ENCODE measurements at regions of chr7 and their contacts with region 1.

Region 1: DNA sequence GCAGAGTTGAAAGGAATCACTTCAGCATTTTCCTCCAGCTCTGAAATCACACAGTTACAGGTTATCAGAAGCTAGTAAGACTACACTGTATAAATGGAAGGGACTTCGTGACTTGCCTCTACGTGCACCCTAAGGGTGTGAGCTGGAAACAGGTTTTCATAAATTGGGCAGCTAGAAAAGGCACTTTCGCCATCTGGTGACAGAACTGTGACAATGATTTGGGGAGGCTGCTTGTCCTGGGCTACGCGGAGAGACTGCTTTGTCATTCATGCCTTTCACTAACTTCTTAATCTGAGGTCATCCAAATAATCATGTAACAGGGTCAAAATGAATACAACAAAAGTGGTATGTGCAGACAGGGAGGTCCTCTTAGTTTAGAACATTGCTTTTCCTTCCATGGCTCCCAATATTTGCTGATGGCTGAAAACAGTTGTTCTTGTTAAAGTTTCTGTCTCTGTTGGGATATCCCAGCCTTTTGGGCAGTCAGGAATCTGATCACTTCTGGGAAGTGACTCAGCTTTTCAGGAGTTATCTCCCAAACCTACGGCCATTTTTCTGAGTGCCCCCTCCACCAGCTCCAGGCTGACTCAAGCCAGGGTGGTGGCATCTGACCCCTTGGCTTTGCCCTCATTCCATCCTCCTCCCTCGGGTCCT is 17.8 kb downstream of the VWC2 start:
- DNase-seq: peak; percentile 91
- H3K4me3 ChIP-seq: no peak overlapping the region
- H3K27ac ChIP-seq: peak overlapping the region; percentile 55
- H3K4me1 ChIP-seq: peaks cover 25% of the 10 kb centered on the region
- CTCF ChIP-seq: peak; percentile 96

Region 2: DNA sequence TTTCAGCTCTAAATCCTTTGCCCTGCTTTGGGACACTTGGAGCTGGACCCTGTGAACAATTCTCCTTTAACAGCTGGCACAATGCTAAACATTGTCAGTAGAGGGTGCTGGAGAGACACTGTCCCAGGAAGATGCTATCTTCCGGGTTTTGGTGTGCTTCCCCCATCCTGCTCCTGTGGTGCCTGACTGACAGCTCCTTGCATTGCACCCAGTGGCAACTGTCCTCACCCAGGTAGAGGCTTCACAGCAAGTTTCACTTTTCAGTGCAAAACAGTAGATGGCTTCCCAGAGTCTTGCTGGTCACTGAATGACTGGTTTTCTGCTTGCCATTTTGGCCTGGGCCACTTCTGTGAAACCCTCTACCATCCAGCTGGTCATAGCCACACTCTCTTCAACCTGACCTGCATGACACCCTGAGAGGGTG is 789.6 kb before region 1 on chr7:
- CTCF ChIA-PET with region 1: no interaction called
- POLR2A ChIA-PET with region 1: interaction called, 5 read pairs
- intact Hi-C with region 1: loop called (anchors 1 kb)
- DNase-seq: peak; percentile 83
- H3K4me3 ChIP-seq: no peak overlapping the region
- H3K27ac ChIP-seq: no peak overlapping the region
- H3K4me1 ChIP-seq: peaks cover 6% of the 10 kb centered on the region
- CTCF ChIP-seq: peak; percentile 89

Region 3: DNA sequence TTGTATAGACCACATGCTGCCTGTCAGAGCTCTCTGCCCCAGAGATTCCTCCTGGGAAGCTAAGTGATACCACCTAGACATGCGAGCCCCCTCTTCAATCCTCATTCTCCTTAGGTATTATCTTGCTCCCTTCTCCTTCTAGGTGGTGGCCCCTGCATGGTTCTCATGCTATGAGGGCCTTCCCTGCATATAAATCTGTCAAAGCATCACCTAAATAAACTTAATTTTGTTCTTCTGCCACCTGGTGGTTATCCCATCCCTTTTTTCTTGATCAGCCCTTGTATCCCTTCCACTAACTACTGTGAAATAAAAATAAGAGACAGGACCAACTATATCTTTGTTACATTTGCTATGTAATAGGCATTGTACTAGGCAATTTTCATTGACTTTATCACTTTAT is 624.8 kb before region 1 on chr7:
- CTCF ChIA-PET with region 1: no interaction called
- POLR2A ChIA-PET with region 1: no interaction called
- intact Hi-C with region 1: loop called (anchors 10 kb)
- DNase-seq: peak; percentile 40
- H3K4me3 ChIP-seq: no peak overlapping the region
- H3K27ac ChIP-seq: no peak overlapping the region
- H3K4me1 ChIP-seq: no peaks in the 10 kb centered on the region
- CTCF ChIP-seq: peak; percentile 76

Region 4: GRCh38 chr7:49483142-49483541 is 308.1 kb before region 1 on chr7:
- CTCF ChIA-PET with region 1: no interaction called
- POLR2A ChIA-PET with region 1: no interaction called
- intact Hi-C with region 1: loop called (anchors 10 kb)
- DNase-seq: peak; percentile 15
- H3K4me3 ChIP-seq: no peak overlapping the region
- H3K27ac ChIP-seq: no peak overlapping the region
- H3K4me1 ChIP-seq: peaks cover 38% of the 10 kb centered on the region
- CTCF ChIP-seq: peak; percentile 63

Region 5: GRCh38 chr7:49527182-49527581 is 264.0 kb before region 1 on chr7:
- CTCF ChIA-PET with region 1: no interaction called
- POLR2A ChIA-PET with region 1: no interaction called
- intact Hi-C with region 1: no loop called
- DNase-seq: no peak
- H3K4me3 ChIP-seq: no peak overlapping the region
- H3K27ac ChIP-seq: no peak overlapping the region
- H3K4me1 ChIP-seq: peaks cover 10% of the 10 kb centered on the region
- CTCF ChIP-seq: no peak

Region 6: GRCh38 chr7:49635800-49636199 is 155.4 kb before region 1 on chr7:
- CTCF ChIA-PET with region 1: no interaction called
- POLR2A ChIA-PET with region 1: no interaction called
- intact Hi-C with region 1: loop called (anchors 10 kb)
- DNase-seq: peak; percentile 29
- H3K4me3 ChIP-seq: no peak overlapping the region
- H3K27ac ChIP-seq: no peak overlapping the region
- H3K4me1 ChIP-seq: no peaks in the 10 kb centered on the region
- CTCF ChIP-seq: peak; percentile 62

Region 7: GRCh38 chr7:49866076-49866735 is 75.0 kb after region 1 on chr7:
- CTCF ChIA-PET with region 1: no interaction called
- POLR2A ChIA-PET with region 1: no interaction called
- intact Hi-C with region 1: no loop called
- DNase-seq: no peak
- H3K4me3 ChIP-seq: no peak overlapping the region
- H3K27ac ChIP-seq: no peak overlapping the region
- H3K4me1 ChIP-seq: peaks cover 13% of the 10 kb centered on the region
- CTCF ChIP-seq: no peak